ENCODE measurements at regions of chr1 and their contacts with region 1.

Region 1: DNA sequence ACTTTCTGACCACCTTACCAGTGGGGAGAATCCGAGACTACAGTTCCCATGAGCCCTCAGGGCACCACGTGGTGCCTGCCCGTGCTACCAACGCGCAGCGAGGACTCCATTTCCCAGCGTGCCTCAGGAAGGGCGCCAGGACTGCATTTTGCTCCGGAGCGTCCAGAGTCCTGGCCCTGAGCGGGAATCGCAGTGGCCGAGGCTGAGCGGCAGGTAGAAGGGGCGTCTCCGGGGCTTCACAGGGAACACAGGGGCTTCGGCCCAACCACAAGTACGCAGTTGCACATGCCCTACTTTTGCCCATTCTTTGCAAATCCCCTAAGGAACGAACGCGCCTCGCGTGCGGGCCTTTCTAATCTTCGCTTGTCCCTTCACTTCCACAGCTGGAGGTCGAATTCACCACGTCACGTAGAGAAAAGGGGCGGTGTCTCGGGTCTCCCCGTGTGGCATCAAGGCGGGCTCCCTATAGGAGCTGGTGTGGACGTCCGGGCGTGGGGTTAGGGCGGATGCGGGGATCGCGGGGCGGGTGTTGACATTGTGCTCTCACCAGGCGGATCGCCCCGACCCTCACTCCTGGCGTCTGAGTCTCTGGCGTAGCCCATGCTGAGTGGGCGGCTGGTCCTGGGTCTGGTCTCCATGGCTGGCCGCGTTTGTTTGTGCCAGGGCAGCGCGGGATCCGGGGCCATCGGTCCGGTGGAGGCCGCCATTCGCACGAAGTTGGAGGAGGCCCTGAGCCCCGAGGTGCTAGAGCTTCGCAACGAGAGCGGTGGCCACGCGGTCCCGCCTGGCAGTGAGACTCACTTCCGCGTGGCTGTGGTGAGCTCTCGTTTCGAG is at the start of gene BOLA1:
- DNase-seq: peak; percentile 71 to 87 (median 74)
- H3K4me3 ChIP-seq: peak within 1 kb of the TSS; percentile 91
- H3K4me3 Mint-ChIP-seq: peak within 1 kb of the TSS; percentile 89 to 97 (median 93)
- H3K27ac ChIP-seq: peak within 1 kb of the TSS; percentile 73
- H3K27ac Mint-ChIP-seq: peak within 1 kb of the TSS; percentile 78 to 97 (median 94)
- H3K4me1 ChIP-seq: peaks cover 7% of the 10 kb centered on the region
- H3K4me1 Mint-ChIP-seq: peaks cover 18 to 20% (median 20%) of the 10 kb centered on the region in 3 donors
- H3K27me3 ChIP-seq: no peaks in the 10 kb centered on the region
- H3K27me3 Mint-ChIP-seq: peaks cover 0 to 2% of the 10 kb centered on the region in 2 donors
- total RNA-seq, gene BOLA1: 27.3 to 28.4 TPM

Region 2: DNA sequence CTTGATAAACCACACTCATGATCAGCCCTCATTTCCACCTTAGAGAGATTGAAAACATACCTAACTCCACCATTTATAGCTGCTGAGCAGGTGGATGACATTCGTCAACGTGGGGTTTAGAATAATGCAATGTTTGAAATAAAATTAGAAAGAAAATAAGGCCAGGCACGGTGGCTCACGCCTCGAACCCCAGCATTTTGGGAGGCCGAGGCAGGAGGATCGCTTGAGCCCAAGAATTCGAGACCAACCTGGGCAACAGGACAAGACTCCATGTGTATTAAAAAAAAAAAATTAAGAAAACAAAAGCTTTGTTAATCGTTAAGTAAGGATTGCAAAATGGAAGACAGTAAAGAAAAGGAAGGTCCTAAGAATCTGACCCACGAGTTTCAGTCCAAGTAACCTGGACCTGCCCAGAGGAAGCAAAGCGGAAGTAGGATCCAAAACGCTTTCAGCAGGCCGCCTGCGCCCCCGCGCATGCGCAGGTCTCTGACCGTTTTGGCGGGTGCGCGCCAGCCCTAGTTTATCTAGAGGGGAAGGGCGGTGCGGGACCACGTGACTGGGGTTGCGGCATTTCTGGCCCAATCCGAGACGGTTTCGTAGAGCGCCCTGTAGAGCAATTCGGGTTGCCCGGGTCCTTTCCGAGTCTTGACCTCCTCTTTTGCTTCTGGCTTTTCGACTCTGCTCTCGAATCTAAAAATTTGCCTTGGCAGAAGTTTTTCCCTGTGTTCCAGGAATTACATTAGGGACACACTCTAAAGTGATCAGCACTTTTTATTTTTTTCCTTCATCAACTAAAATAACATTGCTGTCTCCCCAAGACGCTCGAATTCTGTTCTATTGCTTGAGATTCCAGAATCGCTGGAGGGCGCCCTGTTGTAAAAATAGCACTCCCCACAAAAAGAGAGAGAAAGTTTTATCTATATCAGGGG is 313.8 kb after region 1 on chr1:
- CTCF ChIA-PET with region 1: no interaction called
- POLR2A ChIA-PET with region 1: interaction called, 12 read pairs
- DNase-seq: peak; percentile 86 to 93 (median 88)
- H3K4me3 ChIP-seq: peak overlapping the region; percentile 38
- H3K4me3 Mint-ChIP-seq: peak overlapping the region; percentile 86 to 96 (median 92)
- H3K27ac ChIP-seq: peak overlapping the region; percentile 35
- H3K27ac Mint-ChIP-seq: peak overlapping the region; percentile 88 to 99 (median 96)
- H3K4me1 ChIP-seq: peaks cover 10% of the 10 kb centered on the region
- H3K4me1 Mint-ChIP-seq: peaks cover 15 to 17% (median 17%) of the 10 kb centered on the region in 3 donors
- H3K27me3 ChIP-seq: no peaks in the 10 kb centered on the region
- H3K27me3 Mint-ChIP-seq: no peaks in the 10 kb centered on the region